Lower leg skin (tissue), 4 donors: ENCODE measurements at regions of chr7 and their contacts with region 1.

Region 1: DNA sequence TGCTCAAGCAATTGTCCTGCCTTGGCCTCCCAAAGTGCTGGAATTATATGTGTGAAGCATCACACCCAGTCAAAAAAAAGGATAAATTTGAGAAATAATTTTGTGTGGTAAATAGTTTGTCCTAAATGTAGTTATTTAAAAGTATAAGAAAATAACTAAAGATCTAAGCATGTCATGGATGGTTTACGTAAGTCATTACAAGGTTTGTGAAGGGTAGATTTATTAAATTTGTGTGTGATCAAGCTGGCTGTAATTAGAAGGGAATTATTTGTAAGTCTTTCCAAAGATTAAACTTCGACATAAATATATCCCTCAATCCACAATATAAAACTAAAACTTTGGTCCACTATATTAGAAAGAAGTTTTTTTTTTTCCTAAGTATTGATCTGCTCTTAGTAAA is 28.6 kb downstream of the ORC5 start:
- DNase-seq: no peak
- H3K4me3 ChIP-seq: no peak overlapping the region
- CTCF ChIP-seq: no peak
- POLR2A ChIP-seq: no peak

Region 2: DNA sequence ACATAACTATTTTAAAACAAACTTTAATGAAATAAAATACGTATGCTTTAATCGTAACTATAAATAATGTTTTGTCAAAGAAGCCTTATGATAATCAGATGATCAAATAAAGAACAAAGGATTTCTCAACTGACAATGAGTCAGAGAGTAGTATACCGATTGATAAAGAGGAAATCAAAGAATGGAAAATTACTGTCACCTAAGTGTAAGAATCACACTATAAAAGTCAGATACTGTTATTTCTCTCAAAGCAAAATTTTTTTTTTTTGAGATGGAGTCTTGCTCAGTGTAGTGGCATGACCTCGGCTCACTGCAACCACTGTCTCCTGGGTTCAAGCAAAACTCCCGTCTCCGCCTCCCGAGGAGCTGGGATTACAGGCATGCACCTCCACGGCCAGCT is 853.4 kb before region 1 on chr7:
- intact Hi-C with region 1: no loop called
- DNase-seq: no peak
- H3K4me3 ChIP-seq: no peak overlapping the region
- CTCF ChIP-seq: no peak
- POLR2A ChIP-seq: no peak

Region 3: GRCh38 chr7:104096683-104097082 is 82.5 kb before region 1 on chr7:
- intact Hi-C with region 1: no loop called
- DNase-seq: no peak
- H3K4me3 ChIP-seq: no peak overlapping the region
- CTCF ChIP-seq: no peak
- POLR2A ChIP-seq: no peak

Region 4: DNA sequence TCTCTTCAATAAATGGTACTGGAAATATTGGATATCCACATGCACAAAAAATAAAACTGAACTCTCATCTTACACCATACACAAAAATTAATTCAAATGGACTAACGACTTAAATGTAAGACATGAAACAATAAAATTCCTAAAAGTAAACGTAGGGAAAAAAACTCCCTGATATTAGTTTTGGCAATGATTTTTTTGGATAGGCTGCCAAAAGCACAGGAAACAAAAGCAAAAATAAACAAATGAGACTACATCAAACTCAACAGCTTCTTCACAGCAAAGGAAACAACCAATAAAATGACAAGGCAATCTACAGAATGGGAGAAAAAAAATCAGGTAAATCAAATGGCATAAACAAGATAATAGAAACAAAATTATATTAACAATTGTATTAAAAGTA is 37.0 kb before region 1 on chr7:
- intact Hi-C with region 1: loop called (anchors 2 kb)
- DNase-seq: no peak
- H3K4me3 ChIP-seq: no peak overlapping the region
- CTCF ChIP-seq: no peak
- POLR2A ChIP-seq: no peak

Region 5: GRCh38 chr7:104979167-104979841 is 800.1 kb after region 1 on chr7:
- intact Hi-C with region 1: no loop called
- DNase-seq: peak in 1 of 2 donors; percentile 54
- H3K4me3 ChIP-seq: no peak overlapping the region
- CTCF ChIP-seq: no peak
- POLR2A ChIP-seq: no peak